Heart left ventricle (tissue), 16 donors: ENCODE measurements at regions of chr1 and their contacts with region 1.

Region 1: GRCh38 chr1:165073185-165074007 is 283.1 kb downstream of the LMX1A start:
- DNase-seq: no peak
- ATAC-seq: peak in 3 of 4 donors; percentile 63 to 75 (median 70)
- H3K4me3 ChIP-seq: no peak overlapping the region
- H3K27ac ChIP-seq: peak overlapping the region in 1 of 12 donors; percentile 13
- H3K4me1 ChIP-seq: peaks cover 0 to 10% (median 0%) of the 10 kb centered on the region in 12 donors
- H3K27me3 ChIP-seq: no peaks in the 10 kb centered on the region
- CTCF ChIP-seq: peak; percentile 61 to 88 (median 80)
- POLR2A ChIP-seq: no peak

Region 2: GRCh38 chr1:163361123-163361934 is 1712.1 kb before region 1 on chr1:
- intact Hi-C with region 1: loop called in 7 of 10 experiments (anchors 5 to 10 kb)
- DNase-seq: no peak
- ATAC-seq: no peak
- H3K4me3 ChIP-seq: no peak overlapping the region
- H3K27ac ChIP-seq: no peak overlapping the region
- H3K4me1 ChIP-seq: peaks cover 0 to 5% (median 0%) of the 10 kb centered on the region in 12 donors
- H3K27me3 ChIP-seq: no peaks in the 10 kb centered on the region
- CTCF ChIP-seq: peak in 8 of 12 donors; percentile 17 to 50 (median 34)
- POLR2A ChIP-seq: no peak

Region 3: GRCh38 chr1:163535807-163536206 is 1537.6 kb before region 1 on chr1:
- intact Hi-C with region 1: loop called in 8 of 10 experiments (anchors 2 to 10 kb)
- DNase-seq: no peak
- ATAC-seq: peak in 1 of 4 donors; percentile 58
- H3K4me3 ChIP-seq: no peak overlapping the region
- H3K27ac ChIP-seq: no peak overlapping the region
- H3K4me1 ChIP-seq: peaks cover 0 to 5% (median 0%) of the 10 kb centered on the region in 12 donors
- H3K27me3 ChIP-seq: no peaks in the 10 kb centered on the region
- CTCF ChIP-seq: peak in 10 of 12 donors; percentile 11 to 43 (median 33)
- POLR2A ChIP-seq: no peak

Region 4: DNA sequence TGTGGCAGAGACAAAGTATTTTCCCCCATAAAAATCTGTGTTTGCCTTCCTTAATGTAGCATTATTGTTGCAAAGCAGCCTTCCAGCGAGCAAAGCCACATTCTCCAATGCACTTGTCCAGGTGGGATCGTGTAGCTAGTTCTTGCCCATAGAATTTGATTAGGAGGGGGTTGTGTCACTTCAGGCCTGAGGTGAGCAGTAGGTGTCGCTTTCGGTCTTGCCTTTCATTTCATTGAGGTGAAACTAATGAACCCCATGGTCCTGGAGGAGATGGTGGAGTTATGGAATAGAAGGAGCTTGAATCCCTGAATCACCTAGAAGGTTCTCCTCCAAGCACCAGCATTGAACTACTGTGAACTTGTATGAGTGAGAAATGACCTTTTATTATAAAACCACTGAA is 833.3 kb before region 1 on chr1:
- intact Hi-C with region 1: loop called in 1 of 10 experiments (anchors 10 kb)
- DNase-seq: no peak
- ATAC-seq: no peak
- H3K4me3 ChIP-seq: no peak overlapping the region
- H3K27ac ChIP-seq: no peak overlapping the region
- H3K4me1 ChIP-seq: no peaks in the 10 kb centered on the region
- H3K27me3 ChIP-seq: no peaks in the 10 kb centered on the region
- CTCF ChIP-seq: peak in 10 of 12 donors; percentile 7 to 40 (median 22)
- POLR2A ChIP-seq: no peak

Region 5: GRCh38 chr1:164803366-164803765 is 270.0 kb before region 1 on chr1:
- intact Hi-C with region 1: loop called in 4 of 10 experiments (anchors 10 kb)
- DNase-seq: no peak
- ATAC-seq: no peak
- H3K4me3 ChIP-seq: no peak overlapping the region
- H3K27ac ChIP-seq: no peak overlapping the region
- H3K4me1 ChIP-seq: peaks cover 0 to 47% (median 31%) of the 10 kb centered on the region in 12 donors
- H3K27me3 ChIP-seq: no peaks in the 10 kb centered on the region
- CTCF ChIP-seq: no peak
- POLR2A ChIP-seq: no peak

Region 6: GRCh38 chr1:164930241-164930640 is 143.2 kb before region 1 on chr1:
- intact Hi-C with region 1: loop called in 1 of 10 experiments (anchors 10 kb)
- DNase-seq: no peak
- ATAC-seq: no peak
- H3K4me3 ChIP-seq: no peak overlapping the region
- H3K27ac ChIP-seq: no peak overlapping the region
- H3K4me1 ChIP-seq: peaks cover 0 to 6% (median 0%) of the 10 kb centered on the region in 12 donors
- H3K27me3 ChIP-seq: no peaks in the 10 kb centered on the region
- CTCF ChIP-seq: no peak
- POLR2A ChIP-seq: no peak